ENCODE measurements at regions of chr18 and their contacts with region 1.

Region 1: GRCh38 chr18:35386600-35387351 is 9.6 kb upstream of the ZNF396 start:
- DNase-seq: peak; percentile 18 to 88 (median 64)
- ATAC-seq: peak; percentile 99
- H3K4me3 ChIP-seq: no peak overlapping the region
- H3K4me3 Mint-ChIP-seq: no peak overlapping the region
- H3K27ac ChIP-seq: no peak overlapping the region
- H3K27ac Mint-ChIP-seq: no peak overlapping the region
- H3K4me1 ChIP-seq: no peaks in the 10 kb centered on the region
- H3K4me1 Mint-ChIP-seq: peaks cover 2% of the 10 kb centered on the region
- H3K27me3 ChIP-seq: peaks cover 0 to 4% of the 10 kb centered on the region in 2 experiments
- H3K27me3 Mint-ChIP-seq: peaks cover 19% of the 10 kb centered on the region
- CTCF ChIP-seq: peak; percentile 96

Region 2: DNA sequence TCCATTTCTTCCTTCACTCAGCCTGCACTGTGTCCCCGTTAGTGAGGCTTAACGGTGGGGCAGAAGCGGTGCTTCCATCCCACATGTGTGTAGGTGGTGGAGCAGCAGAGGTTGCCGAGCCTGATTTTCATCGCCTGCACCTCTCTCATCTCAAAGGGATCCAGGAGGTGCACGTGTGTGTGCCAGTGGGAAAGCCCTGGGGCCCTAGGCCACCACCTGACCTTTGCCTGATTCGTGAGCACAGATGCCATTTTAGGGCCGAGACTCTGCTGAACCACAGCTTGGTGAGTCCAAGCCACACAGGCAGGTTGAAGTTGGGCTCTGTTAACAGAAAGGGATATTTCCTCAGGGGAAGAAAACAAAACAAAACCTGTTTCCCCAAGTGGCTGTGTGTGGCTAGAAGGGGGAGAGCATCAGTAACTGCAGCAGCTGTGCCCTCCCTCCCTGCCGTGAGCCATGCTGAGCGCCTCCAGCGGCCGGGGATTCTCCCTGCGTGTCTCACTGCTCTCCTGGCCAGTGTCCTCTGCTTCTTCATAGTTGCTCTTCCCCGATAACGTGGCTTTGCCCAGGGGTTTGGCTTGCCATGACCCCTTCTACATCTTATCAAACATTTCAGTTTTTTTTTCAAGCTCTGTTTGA is 264.1 kb before region 1 on chr18:
- CTCF ChIA-PET with region 1: no interaction called
- POLR2A ChIA-PET with region 1: no interaction called
- intact Hi-C with region 1: no loop called
- DNase-seq: peak in 4 of 9 experiments; percentile 21 to 57 (median 38)
- ATAC-seq: peak; percentile 78
- H3K4me3 ChIP-seq: no peak overlapping the region
- H3K4me3 Mint-ChIP-seq: peak overlapping the region; percentile 60
- H3K27ac ChIP-seq: no peak overlapping the region
- H3K27ac Mint-ChIP-seq: peak overlapping the region; percentile 84
- H3K4me1 ChIP-seq: peaks cover 33% of the 10 kb centered on the region
- H3K4me1 Mint-ChIP-seq: peaks cover 62% of the 10 kb centered on the region
- H3K27me3 ChIP-seq: no peaks in the 10 kb centered on the region
- H3K27me3 Mint-ChIP-seq: no peaks in the 10 kb centered on the region
- CTCF ChIP-seq: peak; percentile 29

Region 3: DNA sequence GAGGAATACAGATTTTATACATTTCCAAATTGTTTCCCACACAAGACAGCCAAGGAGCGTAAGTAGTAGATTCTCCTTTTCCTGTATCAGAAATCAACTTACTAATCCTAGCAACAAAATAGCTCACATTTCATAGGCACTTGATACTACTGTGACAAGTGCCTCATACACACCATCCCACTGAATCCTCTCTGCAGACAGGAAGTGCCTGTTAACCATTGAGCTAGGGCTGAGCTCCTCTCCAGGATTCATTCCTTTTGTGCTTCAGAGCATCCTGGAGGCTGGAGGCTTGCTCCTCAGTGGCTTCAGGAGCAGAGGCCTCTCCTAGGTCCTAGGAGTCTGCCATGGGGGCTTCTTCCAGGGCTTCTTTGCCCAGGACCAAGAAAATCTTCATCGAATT is 11.2 kb after region 1 on chr18:
- CTCF ChIA-PET with region 1: interaction called, 20 read pairs
- POLR2A ChIA-PET with region 1: no interaction called
- intact Hi-C with region 1: no loop called
- DNase-seq: no peak
- ATAC-seq: no peak
- H3K4me3 ChIP-seq: no peak overlapping the region
- H3K4me3 Mint-ChIP-seq: no peak overlapping the region
- H3K27ac ChIP-seq: no peak overlapping the region
- H3K27ac Mint-ChIP-seq: no peak overlapping the region
- H3K4me1 ChIP-seq: no peaks in the 10 kb centered on the region
- H3K4me1 Mint-ChIP-seq: no peaks in the 10 kb centered on the region
- H3K27me3 ChIP-seq: peaks cover 0 to 3% of the 10 kb centered on the region in 2 experiments
- H3K27me3 Mint-ChIP-seq: peaks cover 6% of the 10 kb centered on the region
- CTCF ChIP-seq: no peak

Measured in CD8-positive, alpha-beta T cell (primary cell).